Transverse colon (tissue), 4 donors: ENCODE measurements at regions of chr17 and their contacts with region 1.

Region 1: GRCh38 chr17:59427996-59428395 is 96.5 kb downstream of the YPEL2 start:
- DNase-seq: no peak
- H3K4me3 ChIP-seq: no peak overlapping the region
- H3K27ac ChIP-seq: peak overlapping the region; percentile 69 to 88 (median 82)
- H3K4me1 ChIP-seq: peaks cover 13 to 53% (median 23%) of the 10 kb centered on the region in 4 donors
- H3K27me3 ChIP-seq: no peaks in the 10 kb centered on the region
- CTCF ChIP-seq: no peak
- EP300 ChIP-seq: no peak
- POLR2A ChIP-seq: no peak

Region 2: DNA sequence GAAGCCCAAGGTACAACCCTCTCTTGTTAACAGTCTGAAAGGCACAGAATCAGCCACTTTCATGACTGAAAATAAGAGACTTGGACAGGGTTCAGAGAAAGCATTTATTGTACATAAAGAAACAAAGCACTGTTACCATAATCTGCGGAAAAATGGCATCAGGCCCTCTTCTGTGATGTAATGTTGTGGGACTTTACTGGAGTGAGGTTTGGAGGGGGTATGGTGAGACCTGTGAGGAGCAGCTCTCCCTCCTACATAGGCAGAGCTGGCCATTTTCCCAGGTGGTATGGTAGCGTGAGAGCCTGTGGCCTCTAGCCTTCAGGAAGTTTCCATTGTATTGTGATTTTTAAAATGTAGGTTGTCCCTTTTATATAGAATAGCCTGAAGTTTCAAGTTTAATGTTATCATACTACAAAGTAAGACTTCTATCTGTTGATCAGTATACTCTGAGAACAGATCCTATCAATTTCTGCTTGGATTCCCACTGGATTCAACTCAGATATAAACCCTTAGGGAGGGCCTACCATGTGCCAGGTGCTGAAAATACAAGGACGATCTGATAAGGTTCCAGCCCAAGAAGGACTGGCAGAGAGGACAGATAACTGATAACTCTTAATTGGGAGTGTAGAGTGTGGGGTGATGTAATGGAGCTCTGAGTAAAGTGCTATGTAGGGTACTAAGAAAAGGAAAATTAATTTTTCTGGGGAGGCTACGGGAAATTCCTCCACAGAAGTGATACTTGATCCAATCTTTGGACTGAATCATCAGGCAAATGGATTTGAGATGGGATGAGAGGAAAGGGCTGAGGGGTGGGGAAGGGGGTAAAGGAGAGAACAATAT is 100.7 kb before region 1 on chr17:
- in situ Hi-C with region 1: no loop called
- intact Hi-C with region 1: no loop called
- DNase-seq: no peak
- H3K4me3 ChIP-seq: no peak overlapping the region
- H3K27ac ChIP-seq: no peak overlapping the region
- H3K4me1 ChIP-seq: peaks cover 15 to 37% (median 29%) of the 10 kb centered on the region in 4 donors
- H3K27me3 ChIP-seq: no peaks in the 10 kb centered on the region
- CTCF ChIP-seq: no peak
- EP300 ChIP-seq: no peak
- POLR2A ChIP-seq: no peak

Region 3: DNA sequence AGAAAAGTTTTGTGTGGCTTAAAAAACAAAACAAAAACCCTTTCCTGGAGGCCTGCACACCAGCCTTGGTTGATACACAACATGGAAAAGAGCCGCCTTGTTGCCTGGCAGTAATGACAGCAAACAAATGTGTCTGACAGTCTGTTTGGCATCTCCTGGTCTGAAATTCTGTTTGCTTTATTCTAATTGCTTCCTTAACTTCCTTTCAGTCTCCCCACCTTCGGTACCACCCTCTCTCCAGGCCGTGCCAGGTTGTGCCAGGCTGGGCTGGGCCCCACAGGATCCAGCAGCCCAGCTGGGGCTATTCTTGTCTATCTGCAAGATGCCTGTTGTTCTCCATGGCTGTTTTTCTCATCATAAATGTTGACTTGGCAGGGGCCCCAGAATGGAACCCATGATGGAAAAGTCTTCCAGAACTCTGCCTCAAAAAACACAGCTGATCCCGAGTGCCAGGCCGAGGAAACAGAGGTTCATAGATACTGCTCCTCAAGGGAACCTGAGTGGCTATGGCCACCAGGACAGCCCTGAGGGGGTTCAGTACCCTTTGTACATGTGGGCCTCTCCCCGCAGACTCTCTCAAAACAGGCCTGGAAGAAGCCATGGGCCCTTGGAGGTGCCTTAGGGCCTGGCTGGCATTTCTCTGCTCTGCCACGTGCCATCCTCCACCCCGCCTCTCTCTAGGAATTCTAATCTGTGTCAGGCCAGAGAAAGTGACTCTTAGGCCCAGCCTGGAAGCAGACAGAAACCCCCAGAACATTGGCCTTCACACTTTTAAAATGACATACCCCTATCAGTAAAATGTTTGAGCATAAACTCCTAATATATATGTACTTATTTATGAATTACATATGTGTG is 46.1 kb before region 1 on chr17:
- in situ Hi-C with region 1: no loop called
- intact Hi-C with region 1: loop called (anchors 1 kb)
- DNase-seq: peak; percentile 76
- H3K4me3 ChIP-seq: no peak overlapping the region
- H3K27ac ChIP-seq: peak overlapping the region; percentile 77 to 87 (median 82)
- H3K4me1 ChIP-seq: peaks cover 43 to 63% (median 45%) of the 10 kb centered on the region in 4 donors
- H3K27me3 ChIP-seq: no peaks in the 10 kb centered on the region
- CTCF ChIP-seq: no peak
- EP300 ChIP-seq: no peak
- POLR2A ChIP-seq: no peak

Region 4: DNA sequence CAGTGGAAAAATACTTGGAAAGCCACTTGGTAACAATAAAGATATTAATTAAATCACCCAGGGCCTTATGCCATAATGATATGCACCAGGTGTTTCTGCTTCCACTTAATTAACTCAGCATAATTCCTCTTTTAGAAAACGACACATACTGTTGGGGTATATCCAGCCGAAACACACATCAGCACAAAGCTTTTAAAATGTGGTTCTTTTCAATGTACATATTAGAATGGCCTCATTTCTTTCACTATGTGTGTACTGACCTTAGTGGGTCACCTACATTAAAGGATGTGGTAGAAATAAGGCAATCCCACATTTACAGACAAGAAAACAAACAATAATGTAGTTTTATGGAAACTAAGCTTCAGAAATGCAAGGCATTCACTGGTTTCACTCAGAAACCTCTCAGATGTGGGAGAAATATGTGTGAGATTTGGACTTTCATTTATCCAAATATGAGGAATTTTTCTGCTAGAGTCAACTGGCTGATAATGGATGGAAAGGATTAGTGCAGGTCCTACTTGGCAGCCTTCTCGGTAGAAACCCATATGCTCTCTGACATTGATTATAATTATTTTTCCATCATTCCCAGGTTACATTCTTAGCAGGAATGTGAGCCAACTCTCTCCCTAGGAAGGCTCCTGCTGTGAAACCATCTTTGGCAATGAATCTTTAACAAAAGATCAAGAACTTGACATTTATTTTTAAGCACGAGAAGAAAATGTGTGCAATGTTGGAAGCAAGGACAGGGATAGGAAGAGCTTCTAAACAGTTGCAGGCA is 70.7 kb after region 1 on chr17:
- in situ Hi-C with region 1: no loop called
- intact Hi-C with region 1: no loop called
- DNase-seq: no peak
- H3K4me3 ChIP-seq: no peak overlapping the region
- H3K27ac ChIP-seq: no peak overlapping the region
- H3K4me1 ChIP-seq: no peaks in the 10 kb centered on the region
- H3K27me3 ChIP-seq: no peaks in the 10 kb centered on the region
- CTCF ChIP-seq: no peak
- EP300 ChIP-seq: no peak
- POLR2A ChIP-seq: no peak

Region 5: DNA sequence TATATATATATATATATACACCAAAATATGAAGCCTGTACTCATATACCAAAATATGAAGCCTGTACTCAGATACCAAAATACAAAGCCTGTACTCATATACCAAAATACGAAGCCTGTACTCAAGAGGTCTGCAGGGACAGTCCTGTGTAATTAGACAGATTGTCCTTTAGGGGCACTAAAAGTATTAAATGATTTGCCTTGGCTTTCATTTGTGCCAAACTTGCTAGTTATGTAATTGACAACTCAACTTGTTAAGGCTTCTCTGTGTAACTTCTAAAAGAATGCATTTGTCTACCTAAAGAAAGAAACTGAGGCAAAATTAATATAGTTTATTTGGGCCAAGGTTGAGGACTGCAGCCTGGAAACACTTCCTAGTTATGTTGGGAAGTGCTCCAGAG is 106.6 kb after region 1 on chr17:
- in situ Hi-C with region 1: no loop called
- intact Hi-C with region 1: no loop called
- DNase-seq: no peak
- H3K4me3 ChIP-seq: no peak overlapping the region
- H3K27ac ChIP-seq: no peak overlapping the region
- H3K4me1 ChIP-seq: no peaks in the 10 kb centered on the region
- H3K27me3 ChIP-seq: no peaks in the 10 kb centered on the region
- CTCF ChIP-seq: no peak
- EP300 ChIP-seq: no peak
- POLR2A ChIP-seq: no peak